CD8-positive, alpha-beta T cell (primary cell): ENCODE measurements at regions of chr13 and their contacts with region 1.

Region 1: GRCh38 chr13:41193919-41194824 is at the start of gene KBTBD7:
- DNase-seq: peak; percentile 74 to 93 (median 90)
- ATAC-seq: peak; percentile 95
- H3K4me3 ChIP-seq: peak within 1 kb of the TSS; percentile 67 to 97
- H3K4me3 Mint-ChIP-seq: peak within 1 kb of the TSS; percentile 92
- H3K27ac ChIP-seq: peak within 1 kb of the TSS; percentile 53 to 68
- H3K27ac Mint-ChIP-seq: peak within 1 kb of the TSS; percentile 93
- H3K4me1 ChIP-seq: peaks cover 14% of the 10 kb centered on the region
- H3K4me1 Mint-ChIP-seq: peaks cover 39% of the 10 kb centered on the region
- H3K27me3 ChIP-seq: no peaks in the 10 kb centered on the region
- H3K27me3 Mint-ChIP-seq: no peaks in the 10 kb centered on the region
- CTCF ChIP-seq: no peak
- total RNA-seq, gene KBTBD7: 2.2 to 2.3 TPM

Region 2: DNA sequence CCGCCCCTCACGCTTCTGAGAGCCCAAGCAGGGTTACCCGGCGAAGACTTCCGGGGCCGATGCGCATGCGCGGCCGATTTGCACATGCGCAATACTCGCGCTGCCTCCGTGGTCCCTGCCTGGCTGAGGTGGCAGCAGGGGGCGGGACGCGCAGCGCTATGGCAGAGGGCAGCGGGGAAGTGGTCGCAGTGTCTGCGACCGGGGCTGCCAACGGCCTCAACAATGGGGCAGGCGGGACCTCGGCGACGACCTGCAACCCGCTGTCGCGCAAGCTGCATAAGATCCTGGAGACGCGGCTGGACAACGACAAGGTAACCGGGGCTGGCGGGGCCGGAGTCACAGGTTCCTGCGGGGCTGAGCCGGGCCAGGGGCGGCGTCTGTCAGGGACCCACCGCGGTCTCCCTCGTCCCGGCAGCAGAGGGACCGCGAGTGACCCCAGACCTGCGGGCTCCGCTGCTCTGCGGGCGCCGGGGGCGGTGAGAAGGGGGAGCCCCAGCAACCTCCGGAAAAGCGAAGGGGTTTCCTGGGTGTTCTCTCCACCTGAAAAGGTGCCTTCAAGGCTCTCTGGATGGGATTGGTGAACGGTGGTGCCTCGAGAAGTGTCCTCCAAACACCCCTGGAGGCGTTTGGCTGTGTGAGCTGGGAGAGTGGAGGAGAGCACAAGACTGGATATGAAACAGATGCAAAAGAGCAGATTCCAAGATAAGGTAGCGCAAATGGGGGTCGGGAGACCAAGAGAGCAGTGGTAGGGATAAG is 1538.4 kb before region 1 on chr13 and contains the start of gene COG6:
- CTCF ChIA-PET with region 1: no interaction called
- POLR2A ChIA-PET with region 1: no interaction called
- intact Hi-C with region 1: loop called in 1 of 2 experiments (anchors 5 kb)
- DNase-seq: peak; percentile 90 to 99 (median 96)
- ATAC-seq: peak; percentile 87
- H3K4me3 ChIP-seq: peak within 1 kb of the TSS; percentile 96 to 97
- H3K4me3 Mint-ChIP-seq: peak within 1 kb of the TSS; percentile 98
- H3K27ac ChIP-seq: peak within 1 kb of the TSS; percentile 68 to 70
- H3K27ac Mint-ChIP-seq: peak within 1 kb of the TSS; percentile 93
- H3K4me1 ChIP-seq: peaks cover 6% of the 10 kb centered on the region
- H3K4me1 Mint-ChIP-seq: peaks cover 36% of the 10 kb centered on the region
- H3K27me3 ChIP-seq: peaks cover 0 to 4% of the 10 kb centered on the region in 2 experiments
- H3K27me3 Mint-ChIP-seq: no peaks in the 10 kb centered on the region
- CTCF ChIP-seq: no peak
- total RNA-seq, gene COG6: 10.1 to 18.3 TPM

Region 3: GRCh38 chr13:40329657-40330485 is 864.3 kb before region 1 on chr13:
- CTCF ChIA-PET with region 1: no interaction called
- POLR2A ChIA-PET with region 1: no interaction called
- intact Hi-C with region 1: loop called in 1 of 2 experiments (anchors 10 kb)
- DNase-seq: no peak
- ATAC-seq: no peak
- H3K4me3 ChIP-seq: no peak overlapping the region
- H3K4me3 Mint-ChIP-seq: no peak overlapping the region
- H3K27ac ChIP-seq: no peak overlapping the region
- H3K27ac Mint-ChIP-seq: no peak overlapping the region
- H3K4me1 ChIP-seq: peaks cover 22% of the 10 kb centered on the region
- H3K4me1 Mint-ChIP-seq: peaks cover 31% of the 10 kb centered on the region
- H3K27me3 ChIP-seq: no peaks in the 10 kb centered on the region
- H3K27me3 Mint-ChIP-seq: no peaks in the 10 kb centered on the region
- CTCF ChIP-seq: no peak

Region 4: DNA sequence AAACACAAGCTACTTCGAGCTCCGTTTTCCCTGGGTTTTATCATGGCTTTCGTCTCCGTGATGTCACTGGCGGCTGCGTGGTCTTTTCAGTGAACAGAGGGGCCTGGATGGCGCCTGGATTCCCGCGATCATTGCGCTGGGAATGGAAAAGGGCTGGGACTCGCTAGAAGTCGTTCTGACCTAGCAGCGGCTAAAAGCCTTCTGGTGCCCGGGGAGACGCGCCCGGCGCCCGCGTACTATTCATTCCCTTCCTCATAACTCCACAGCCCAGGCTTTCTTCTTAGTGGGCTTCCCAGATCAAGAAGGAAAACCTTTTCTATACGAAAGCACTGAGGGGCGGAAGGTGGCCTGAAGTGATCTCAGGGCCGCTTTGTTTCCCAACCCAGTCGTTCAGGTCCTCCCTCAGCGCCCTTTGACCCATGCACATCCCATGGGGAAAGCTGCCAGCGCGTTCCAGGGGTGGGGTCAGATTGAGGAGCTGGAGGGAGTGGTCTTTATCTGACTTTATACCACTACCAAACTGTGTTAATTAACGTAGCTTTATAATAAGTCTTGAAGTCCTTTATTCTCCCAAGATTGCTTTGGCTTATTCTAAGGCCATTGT is 271.6 kb before region 1 on chr13:
- CTCF ChIA-PET with region 1: no interaction called
- POLR2A ChIA-PET with region 1: no interaction called
- intact Hi-C with region 1: loop called (anchors 1 to 5 kb)
- DNase-seq: peak in 2 of 9 experiments; percentile 17 to 30
- ATAC-seq: no peak
- H3K4me3 ChIP-seq: no peak overlapping the region
- H3K4me3 Mint-ChIP-seq: peak overlapping the region; percentile 59
- H3K27ac ChIP-seq: no peak overlapping the region
- H3K27ac Mint-ChIP-seq: peak overlapping the region; percentile 82
- H3K4me1 ChIP-seq: peaks cover 8% of the 10 kb centered on the region
- H3K4me1 Mint-ChIP-seq: peaks cover 27% of the 10 kb centered on the region
- H3K27me3 ChIP-seq: no peaks in the 10 kb centered on the region
- H3K27me3 Mint-ChIP-seq: no peaks in the 10 kb centered on the region
- CTCF ChIP-seq: no peak

Region 5: GRCh38 chr13:41004875-41005693 is 189.1 kb before region 1 on chr13:
- CTCF ChIA-PET with region 1: no interaction called
- POLR2A ChIA-PET with region 1: no interaction called
- intact Hi-C with region 1: no loop called
- DNase-seq: peak in 2 of 9 experiments; percentile 62 to 80
- ATAC-seq: peak; percentile 83
- H3K4me3 ChIP-seq: peak overlapping the region; percentile 6 to 13
- H3K4me3 Mint-ChIP-seq: peak overlapping the region; percentile 73
- H3K27ac ChIP-seq: peak overlapping the region; percentile 18 to 76
- H3K27ac Mint-ChIP-seq: peak overlapping the region; percentile 90
- H3K4me1 ChIP-seq: peaks cover 78% of the 10 kb centered on the region
- H3K4me1 Mint-ChIP-seq: peaks cover 79% of the 10 kb centered on the region
- H3K27me3 ChIP-seq: no peaks in the 10 kb centered on the region
- H3K27me3 Mint-ChIP-seq: no peaks in the 10 kb centered on the region
- CTCF ChIP-seq: no peak

Region 6: DNA sequence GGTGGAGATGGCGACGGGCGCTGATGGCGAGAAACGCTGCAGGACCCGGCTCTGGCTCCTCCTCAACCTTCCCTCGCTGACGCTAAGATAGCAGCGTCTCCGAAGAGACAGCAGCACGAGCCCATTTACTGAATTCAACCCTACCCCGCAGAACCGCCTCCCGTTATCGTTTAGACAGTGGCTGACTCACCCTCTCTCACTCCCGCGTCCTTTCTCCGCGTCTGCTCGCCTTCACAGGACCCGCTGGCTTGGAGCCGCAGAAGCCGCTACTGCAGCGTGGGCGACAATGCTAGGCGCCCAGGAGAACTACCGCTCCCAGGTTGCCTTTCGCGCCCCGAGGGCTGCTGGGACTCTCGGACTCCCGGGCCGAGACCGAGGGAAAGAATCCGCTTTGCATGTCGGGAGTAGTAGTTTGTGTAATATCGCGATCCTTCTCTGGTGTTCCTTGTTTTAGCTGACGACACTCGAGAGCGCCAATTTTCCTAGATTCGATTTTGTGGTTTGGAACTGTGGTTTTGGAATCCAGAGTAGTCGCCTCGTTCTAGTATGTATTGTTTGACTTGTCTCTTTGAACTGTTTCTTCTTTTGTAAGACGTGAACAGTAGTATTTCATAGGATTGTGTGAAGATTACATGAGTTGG is 61.5 kb before region 1 on chr13 and contains the start of gene KBTBD6:
- CTCF ChIA-PET with region 1: no interaction called
- POLR2A ChIA-PET with region 1: no interaction called
- intact Hi-C with region 1: loop called (anchors 1 kb)
- DNase-seq: peak; percentile 80 to 96 (median 90)
- ATAC-seq: peak; percentile 95
- H3K4me3 ChIP-seq: peak within 1 kb of the TSS; percentile 70 to 80
- H3K4me3 Mint-ChIP-seq: peak within 1 kb of the TSS; percentile 95
- H3K27ac ChIP-seq: peak within 1 kb of the TSS; percentile 48 to 64
- H3K27ac Mint-ChIP-seq: peak within 1 kb of the TSS; percentile 93
- H3K4me1 ChIP-seq: peaks cover 43% of the 10 kb centered on the region
- H3K4me1 Mint-ChIP-seq: peaks cover 55% of the 10 kb centered on the region
- H3K27me3 ChIP-seq: no peaks in the 10 kb centered on the region
- H3K27me3 Mint-ChIP-seq: no peaks in the 10 kb centered on the region
- CTCF ChIP-seq: no peak
- total RNA-seq, gene KBTBD6: 2.2 to 2.3 TPM

Region 7: GRCh38 chr13:41263261-41264027 is 69.3 kb after region 1 on chr13 and contains the start of gene MTRF1:
- CTCF ChIA-PET with region 1: no interaction called
- POLR2A ChIA-PET with region 1: no interaction called
- intact Hi-C with region 1: loop called (anchors 1 kb)
- DNase-seq: peak; percentile 65 to 91 (median 82)
- ATAC-seq: peak; percentile 90
- H3K4me3 ChIP-seq: peak within 1 kb of the TSS; percentile 68 to 72
- H3K4me3 Mint-ChIP-seq: peak within 1 kb of the TSS; percentile 99
- H3K27ac ChIP-seq: peak within 1 kb of the TSS; percentile 73 to 84
- H3K27ac Mint-ChIP-seq: peak within 1 kb of the TSS; percentile 99
- H3K4me1 ChIP-seq: peaks cover 26% of the 10 kb centered on the region
- H3K4me1 Mint-ChIP-seq: peaks cover 40% of the 10 kb centered on the region
- H3K27me3 ChIP-seq: no peaks in the 10 kb centered on the region
- H3K27me3 Mint-ChIP-seq: no peaks in the 10 kb centered on the region
- CTCF ChIP-seq: no peak
- total RNA-seq, gene MTRF1: 26.2 to 26.9 TPM

Region 8: GRCh38 chr13:42039946-42040729 is 846.0 kb after region 1 on chr13:
- CTCF ChIA-PET with region 1: no interaction called
- POLR2A ChIA-PET with region 1: no interaction called
- intact Hi-C with region 1: loop called in 1 of 2 experiments (anchors 10 kb)
- DNase-seq: peak; percentile 70 to 94 (median 88)
- ATAC-seq: peak; percentile 81
- H3K4me3 ChIP-seq: peak overlapping the region; percentile 47 to 88
- H3K4me3 Mint-ChIP-seq: peak overlapping the region; percentile 91
- H3K27ac ChIP-seq: peak overlapping the region; percentile 23 to 72
- H3K27ac Mint-ChIP-seq: peak overlapping the region; percentile 72
- H3K4me1 ChIP-seq: peaks cover 9% of the 10 kb centered on the region
- H3K4me1 Mint-ChIP-seq: peaks cover 16% of the 10 kb centered on the region
- H3K27me3 ChIP-seq: no peaks in the 10 kb centered on the region
- H3K27me3 Mint-ChIP-seq: no peaks in the 10 kb centered on the region
- CTCF ChIP-seq: no peak

Region 9: DNA sequence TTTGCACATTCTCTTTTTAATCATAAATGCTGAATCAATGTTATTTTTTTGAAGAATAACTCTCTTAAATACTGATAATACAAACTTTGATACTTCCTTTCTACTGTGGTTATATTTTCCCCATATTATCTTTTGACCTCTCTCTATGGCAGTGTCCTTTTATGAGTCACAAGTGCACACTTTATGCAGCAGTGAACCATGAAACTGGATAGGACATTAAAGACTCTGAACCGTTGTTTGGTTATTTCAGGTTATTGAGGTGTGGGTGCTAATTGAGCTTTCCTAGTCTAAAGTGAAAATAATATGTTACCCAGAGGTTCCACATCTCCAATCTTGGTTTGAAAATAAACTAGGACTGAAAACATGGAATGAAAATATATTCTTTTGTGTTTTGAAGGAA is 925.7 kb after region 1 on chr13:
- CTCF ChIA-PET with region 1: no interaction called
- POLR2A ChIA-PET with region 1: no interaction called
- intact Hi-C with region 1: no loop called
- DNase-seq: no peak
- ATAC-seq: no peak
- H3K4me3 ChIP-seq: no peak overlapping the region
- H3K4me3 Mint-ChIP-seq: no peak overlapping the region
- H3K27ac ChIP-seq: no peak overlapping the region
- H3K27ac Mint-ChIP-seq: no peak overlapping the region
- H3K4me1 ChIP-seq: no peaks in the 10 kb centered on the region
- H3K4me1 Mint-ChIP-seq: no peaks in the 10 kb centered on the region
- H3K27me3 ChIP-seq: no peaks in the 10 kb centered on the region
- H3K27me3 Mint-ChIP-seq: no peaks in the 10 kb centered on the region
- CTCF ChIP-seq: no peak